ENCODE measurements at regions of chr11 and their contacts with region 1.

Region 1: DNA sequence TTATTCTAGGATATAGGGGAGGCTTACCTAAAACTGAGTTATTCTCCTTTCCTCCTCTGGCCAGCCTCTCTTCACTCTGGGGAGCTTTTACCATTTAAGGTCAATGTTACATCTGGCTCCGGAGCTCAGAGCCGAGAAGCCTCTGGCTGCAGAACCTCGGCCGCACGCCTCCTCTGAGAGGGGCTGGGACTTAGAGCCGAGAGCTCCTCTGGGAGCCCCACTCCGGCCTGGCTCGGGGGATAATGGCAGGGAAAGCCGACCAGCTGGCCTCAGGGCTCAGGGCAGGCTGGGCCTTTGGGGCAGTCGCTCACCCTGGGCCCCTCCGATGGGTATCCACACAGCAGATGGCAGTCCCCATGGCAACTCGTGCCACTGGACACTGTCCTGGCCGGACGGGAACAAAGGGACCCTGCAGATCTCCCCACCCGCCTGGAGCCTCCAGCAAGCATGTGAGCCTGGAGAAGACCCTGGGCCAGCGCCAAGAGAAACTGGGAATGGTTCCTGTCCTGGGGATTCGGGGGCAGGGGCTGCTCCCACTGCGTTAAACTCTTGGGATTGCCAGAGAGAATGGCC is at the start of gene IRAG1:
- DNase-seq: peak; percentile 87 to 92
- ATAC-seq: peak; percentile 82
- H3K4me3 ChIP-seq: peak within 1 kb of the TSS; percentile 87 to 98
- H3K27ac ChIP-seq: peak within 1 kb of the TSS; percentile 92 to 99
- H3K4me1 ChIP-seq: peaks cover 0 to 8% of the 10 kb centered on the region in 2 donors
- H3K27me3 ChIP-seq: no peaks in the 10 kb centered on the region
- total RNA-seq, gene IRAG1: 189 to 518 TPM

Region 2: GRCh38 chr11:10573556-10573955 is 120.0 kb before region 1 on chr11:
- intact Hi-C with region 1: loop called in 1 of 2 experiments (anchors 5 kb)
- DNase-seq: no peak
- ATAC-seq: no peak
- H3K4me3 ChIP-seq: no peak overlapping the region
- H3K27ac ChIP-seq: peak overlapping the region; percentile 61 to 85
- H3K4me1 ChIP-seq: peaks cover 2 to 5% of the 10 kb centered on the region in 2 donors
- H3K27me3 ChIP-seq: no peaks in the 10 kb centered on the region

Region 3: DNA sequence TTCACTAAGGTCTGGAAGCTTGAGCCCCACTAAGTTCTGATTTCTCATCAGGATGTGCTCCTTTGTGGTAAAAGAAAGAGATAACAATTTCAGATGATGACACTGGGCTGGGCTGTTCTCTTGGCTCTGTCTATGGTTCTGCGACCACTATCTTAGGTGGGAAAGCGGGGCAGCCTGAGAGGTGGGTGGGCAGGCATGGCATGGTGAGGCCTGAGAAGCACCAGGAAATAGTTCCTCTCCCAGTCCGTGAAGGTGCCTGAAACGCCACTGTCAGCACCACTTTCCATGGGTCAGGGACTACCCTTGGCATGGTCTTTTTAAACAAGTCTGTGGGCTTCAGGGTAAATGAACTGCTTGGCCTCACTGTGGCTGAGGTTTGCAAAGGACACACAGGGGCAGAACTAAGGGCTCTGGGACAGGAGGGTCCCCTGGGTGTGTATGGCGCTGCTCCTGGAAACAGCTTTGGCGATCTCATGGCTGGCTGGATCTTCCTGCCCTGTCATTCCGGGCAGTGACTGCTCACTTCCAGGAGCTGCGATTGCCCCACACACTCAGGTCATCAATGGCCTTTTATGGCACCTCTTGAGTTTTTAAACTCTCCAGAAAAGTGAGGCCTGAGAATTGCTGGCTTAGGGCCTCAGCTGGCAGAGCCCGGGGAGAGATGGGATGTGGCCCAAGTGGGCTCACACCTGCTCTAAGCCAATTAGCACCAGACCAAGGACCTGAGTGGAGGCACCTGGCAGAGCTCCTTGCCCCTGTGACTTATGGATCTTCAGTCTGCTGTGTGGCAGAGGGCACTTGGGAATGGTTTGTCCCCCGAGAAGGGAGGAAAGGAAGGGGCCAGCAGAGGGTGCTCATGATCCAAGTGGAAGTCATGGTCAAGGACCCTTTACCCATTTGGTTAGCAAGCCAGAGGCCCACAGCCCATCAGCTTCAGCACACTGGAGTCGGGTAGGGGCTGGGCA is 69.5 kb before region 1 on chr11:
- intact Hi-C with region 1: no loop called
- DNase-seq: no peak
- ATAC-seq: peak; percentile 54
- H3K4me3 ChIP-seq: no peak overlapping the region
- H3K27ac ChIP-seq: peak overlapping the region; percentile 62 to 74
- H3K4me1 ChIP-seq: peaks cover 0 to under 1% of the 10 kb centered on the region in 2 donors
- H3K27me3 ChIP-seq: no peaks in the 10 kb centered on the region